ENCODE measurements at regions of chr11 and their contacts with region 1.

Region 1: DNA sequence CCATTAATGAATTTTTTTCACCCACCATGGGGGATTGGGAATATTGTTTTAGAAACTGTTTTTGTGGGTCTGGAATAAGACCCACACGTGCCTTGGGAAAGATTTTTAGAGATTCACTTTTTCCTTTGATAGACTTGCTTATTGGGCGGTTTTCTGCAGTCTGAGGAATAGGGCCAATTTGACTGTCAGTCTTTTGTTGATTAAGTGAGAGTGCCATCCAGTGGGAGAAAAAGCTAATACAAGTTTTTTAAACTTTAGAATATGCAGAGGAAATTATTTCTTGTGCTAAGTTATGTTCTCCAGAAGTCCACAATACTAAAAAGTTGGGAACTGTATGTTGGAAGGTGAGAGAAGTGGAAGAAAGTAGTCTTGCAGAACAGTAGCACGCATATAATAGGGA is 56.1 kb downstream of the PRMT3 start:
- DNase-seq: peak; percentile 4
- H3K4me3 ChIP-seq: no peak overlapping the region
- H3K27ac ChIP-seq: no peak overlapping the region
- H3K4me1 ChIP-seq: no peaks in the 10 kb centered on the region
- H3K27me3 ChIP-seq: no peaks in the 10 kb centered on the region
- CTCF ChIP-seq: peak; percentile 39 to 43

Region 2: DNA sequence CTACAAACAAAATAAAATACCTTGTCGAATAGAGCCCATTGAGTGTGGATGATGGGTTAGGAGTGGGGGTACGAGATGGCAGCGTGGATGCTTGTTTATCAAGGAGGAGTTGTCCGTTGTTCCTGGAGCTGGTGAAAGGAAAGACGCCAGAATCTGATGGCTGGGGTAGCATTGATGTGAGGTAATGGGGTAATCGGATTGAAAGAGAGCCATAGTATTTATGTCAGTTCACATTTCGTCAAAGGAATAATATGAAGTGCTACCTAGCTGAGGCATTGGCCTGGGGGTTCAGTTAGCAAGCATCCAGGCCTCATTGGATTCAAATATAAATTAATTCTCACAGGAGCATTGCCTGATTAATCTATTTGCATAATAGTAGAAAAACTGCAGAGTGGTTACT is 266.5 kb before region 1 on chr11:
- CTCF ChIA-PET with region 1: no interaction called
- dilution Hi-C with region 1: no loop called
- in situ Hi-C with region 1: no loop called
- intact Hi-C with region 1: no loop called
- DNase-seq: no peak
- H3K4me3 ChIP-seq: no peak overlapping the region
- H3K27ac ChIP-seq: no peak overlapping the region
- H3K4me1 ChIP-seq: no peaks in the 10 kb centered on the region
- H3K27me3 ChIP-seq: peaks cover 6% of the 10 kb centered on the region
- CTCF ChIP-seq: no peak

Region 3: DNA sequence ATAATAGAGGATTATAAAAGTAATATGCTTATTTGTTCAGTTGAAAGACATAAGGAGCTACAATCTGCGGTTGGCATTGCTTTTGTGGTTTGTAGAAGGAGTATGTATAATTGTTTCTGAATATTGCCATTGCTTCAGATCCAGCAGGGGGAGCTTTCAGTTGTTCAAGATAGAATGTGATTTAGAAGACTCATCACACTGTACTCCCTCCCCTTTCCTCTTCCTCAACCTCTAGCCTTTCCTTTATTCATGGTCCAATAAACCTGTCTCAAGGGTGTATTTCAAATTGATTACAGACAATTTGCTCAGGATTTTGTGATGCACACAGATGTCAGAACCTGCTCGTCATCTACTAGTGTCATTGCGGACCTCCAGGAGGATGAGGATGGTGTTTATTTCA is 46.3 kb before region 1 on chr11:
- CTCF ChIA-PET with region 1: no interaction called
- dilution Hi-C with region 1: no loop called
- in situ Hi-C with region 1: no loop called
- intact Hi-C with region 1: loop called (anchors 5 kb)
- DNase-seq: peak; percentile 49
- H3K4me3 ChIP-seq: no peak overlapping the region
- H3K27ac ChIP-seq: no peak overlapping the region
- H3K4me1 ChIP-seq: no peaks in the 10 kb centered on the region
- H3K27me3 ChIP-seq: no peaks in the 10 kb centered on the region
- CTCF ChIP-seq: peak; percentile 64 to 76